T47D (cell line): ENCODE measurements at regions of chr14 and their contacts with region 1.

Region 1: GRCh38 chr14:67599698-67600561 is at the start of gene PIGH:
- DNase-seq: peak; percentile 93

Region 2: GRCh38 chr14:67426983-67427606 is 172.8 kb before region 1 on chr14:
- in situ Hi-C with region 1: loop called (anchors 25 kb)
- DNase-seq: peak; percentile 84 to 93